Common myeloid progenitor, CD34-positive (primary cell): ENCODE measurements at regions of chr4 and their contacts with region 1.

Region 1: DNA sequence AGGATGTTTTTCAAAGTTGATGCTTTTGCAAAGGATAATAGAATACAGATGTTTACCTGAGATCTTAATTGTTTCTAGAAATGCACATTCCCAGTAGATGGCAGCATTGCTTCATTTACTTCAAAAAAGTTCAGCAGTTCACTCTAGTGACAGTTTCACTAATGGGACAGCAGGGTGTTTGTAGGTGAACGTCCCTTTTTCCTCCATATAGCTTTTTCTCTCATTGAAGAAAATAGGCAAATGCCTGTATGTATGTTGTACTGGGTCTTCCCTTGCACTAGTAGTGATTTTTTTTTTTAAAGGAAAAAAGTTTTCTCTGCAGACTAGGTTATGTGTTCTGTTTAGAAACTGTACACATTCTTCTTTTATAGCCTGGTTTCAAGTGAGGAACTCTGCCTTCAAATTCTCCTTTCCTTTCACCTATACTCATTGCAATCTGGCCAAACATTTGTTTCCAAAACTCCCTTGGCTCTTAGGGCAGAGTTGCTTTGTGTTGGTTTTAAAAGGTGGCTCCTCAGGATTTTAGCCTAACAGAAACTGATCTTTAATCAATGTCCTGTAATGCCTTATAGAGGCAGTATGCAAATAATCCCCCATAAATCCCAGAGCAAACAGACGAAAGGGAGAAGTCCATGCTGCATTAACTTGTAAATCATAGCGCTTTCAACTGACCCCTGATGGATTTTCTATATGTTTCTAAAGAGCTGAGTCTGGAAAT is 86.3 kb downstream of the EGF start:
- DNase-seq: peak; percentile 81 to 89 (median 83)
- H3K4me3 ChIP-seq: no peak overlapping the region
- H3K27ac ChIP-seq: no peak overlapping the region
- H3K4me1 ChIP-seq: peaks cover 0 to 21% (median 6%) of the 10 kb centered on the region in 4 experiments
- H3K27me3 ChIP-seq: peaks cover 0 to 1% (median 0%) of the 10 kb centered on the region in 5 experiments

Region 2: DNA sequence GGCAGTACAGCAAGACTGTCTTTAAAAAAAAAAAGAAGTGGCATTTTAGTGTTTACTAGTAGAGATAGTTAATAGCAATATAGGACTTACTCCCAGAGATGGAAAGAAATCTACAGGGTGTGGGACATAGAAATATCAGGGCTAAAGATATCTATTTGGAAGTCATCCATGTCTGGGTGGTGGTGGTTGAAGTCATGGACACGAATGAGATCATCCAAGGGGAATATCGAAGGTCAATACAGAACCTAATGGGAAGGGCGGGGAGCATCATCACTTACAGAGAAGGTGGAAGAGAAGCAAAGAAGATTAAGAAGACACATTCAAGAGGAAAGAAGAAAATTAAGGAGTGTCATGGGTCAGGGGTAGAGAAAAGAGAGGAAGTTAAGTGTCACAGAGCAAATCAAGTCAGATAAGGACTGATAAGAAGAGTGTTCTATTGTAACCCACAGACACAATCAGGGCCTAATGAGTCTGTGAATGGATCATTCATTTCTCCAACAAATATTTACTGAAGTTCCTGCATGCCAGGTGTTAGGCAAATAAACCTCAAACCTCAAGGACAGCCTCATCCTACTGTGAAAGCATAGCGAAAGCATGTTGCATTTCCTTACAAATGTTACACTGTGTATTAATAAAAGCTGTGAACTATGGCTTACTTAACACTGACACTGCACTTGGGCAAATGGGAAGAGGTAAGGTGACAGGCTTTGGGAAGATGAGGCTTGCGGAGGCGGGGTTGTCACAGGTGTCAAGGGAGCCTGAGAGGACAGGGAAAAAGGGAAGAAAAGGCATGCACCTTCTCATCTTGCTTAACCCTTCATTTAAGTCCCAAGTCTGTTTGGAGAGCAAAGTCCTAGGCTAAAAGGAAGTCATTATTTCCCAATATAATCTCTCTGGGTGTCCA is 134.0 kb after region 1 on chr4:
- CTCF ChIA-PET with region 1: no interaction called
- POLR2A ChIA-PET with region 1: no interaction called
- DNase-seq: no peak
- H3K4me3 ChIP-seq: no peak overlapping the region
- H3K27ac ChIP-seq: no peak overlapping the region
- H3K4me1 ChIP-seq: peaks cover 0 to 4% (median 0%) of the 10 kb centered on the region in 4 experiments
- H3K27me3 ChIP-seq: no peaks in the 10 kb centered on the region

Region 3: GRCh38 chr4:110516106-110516922 is 517.3 kb after region 1 on chr4:
- CTCF ChIA-PET with region 1: interaction called, 566 read pairs
- POLR2A ChIA-PET with region 1: no interaction called
- DNase-seq: peak; percentile 82 to 86 (median 85)
- H3K4me3 ChIP-seq: peak overlapping the region; percentile 57 to 100 (median 88)
- H3K27ac ChIP-seq: peak overlapping the region; percentile 30 to 83
- H3K4me1 ChIP-seq: peaks cover 0 to 10% (median 4%) of the 10 kb centered on the region in 4 experiments
- H3K27me3 ChIP-seq: no peaks in the 10 kb centered on the region